ENCODE measurements at regions of chr1 and their contacts with region 1.

Region 1: GRCh38 chr1:220426989-220427388 is 100.9 kb upstream of the MARK1 start:
- DNase-seq: peak; percentile 98
- H3K4me3 Mint-ChIP-seq: peak overlapping the region; percentile 22
- H3K27ac Mint-ChIP-seq: peak overlapping the region; percentile 75
- H3K4me1 Mint-ChIP-seq: peaks cover 33% of the 10 kb centered on the region
- H3K27me3 Mint-ChIP-seq: no peaks in the 10 kb centered on the region
- CTCF ChIP-seq: no peak

Region 2: GRCh38 chr1:220363196-220363837 is 63.7 kb before region 1 on chr1:
- CTCF ChIA-PET with region 1: no interaction called
- POLR2A ChIA-PET with region 1: no interaction called
- intact Hi-C with region 1: no loop called
- DNase-seq: peak; percentile 39
- H3K4me3 Mint-ChIP-seq: no peak overlapping the region
- H3K27ac Mint-ChIP-seq: no peak overlapping the region
- H3K4me1 Mint-ChIP-seq: peaks cover 6% of the 10 kb centered on the region
- H3K27me3 Mint-ChIP-seq: no peaks in the 10 kb centered on the region
- CTCF ChIP-seq: no peak

Region 3: DNA sequence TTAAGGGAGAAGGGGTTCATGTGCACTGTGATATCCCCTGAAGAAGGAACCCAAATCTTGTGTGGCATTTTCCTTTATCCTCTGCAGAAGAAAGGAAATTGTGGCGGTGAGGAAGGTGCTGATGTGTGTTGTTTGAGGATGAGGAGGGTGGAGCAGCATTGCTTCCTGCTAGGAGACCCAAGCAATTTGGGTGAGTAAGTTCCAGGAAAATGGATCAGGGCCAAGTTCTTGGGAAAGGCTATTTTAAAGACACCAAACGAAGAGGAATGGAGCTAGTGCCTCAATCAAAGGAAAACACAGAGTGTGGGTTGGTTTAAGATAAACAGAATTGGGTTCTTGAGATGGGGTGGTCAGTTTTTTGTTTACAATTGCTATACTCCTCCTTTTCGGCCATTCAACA is 14.2 kb after region 1 on chr1:
- CTCF ChIA-PET with region 1: interaction called, 4 read pairs
- POLR2A ChIA-PET with region 1: interaction called, 10 read pairs
- intact Hi-C with region 1: no loop called
- DNase-seq: peak; percentile 80
- H3K4me3 Mint-ChIP-seq: no peak overlapping the region
- H3K27ac Mint-ChIP-seq: no peak overlapping the region
- H3K4me1 Mint-ChIP-seq: peaks cover 8% of the 10 kb centered on the region
- H3K27me3 Mint-ChIP-seq: no peaks in the 10 kb centered on the region
- CTCF ChIP-seq: no peak

Measured in MCF 10A (cell line).